ENCODE measurements at regions of chr11 and their contacts with region 1.

Region 1: GRCh38 chr11:8263769-8264410 is at the start of gene LMO1:
- DNase-seq: peak; percentile 83 to 90
- ATAC-seq: peak; percentile 72 to 81 (median 76)
- H3K4me3 ChIP-seq: peak within 1 kb of the TSS; percentile 74
- H3K27ac ChIP-seq: peak within 1 kb of the TSS; percentile 73
- H3K4me1 ChIP-seq: peaks cover 19% of the 10 kb centered on the region
- H3K27me3 ChIP-seq: peaks cover 0 to 40% (median 16%) of the 10 kb centered on the region in 3 donors
- CTCF ChIP-seq: peak; percentile 89
- total RNA-seq, gene LMO1: 3.2 to 9.3 (median 4.4) TPM

Region 2: GRCh38 chr11:7910286-7910788 is 353.6 kb before region 1 on chr11:
- intact Hi-C with region 1: no loop called
- DNase-seq: no peak
- ATAC-seq: no peak
- H3K4me3 ChIP-seq: no peak overlapping the region
- H3K27ac ChIP-seq: no peak overlapping the region
- H3K4me1 ChIP-seq: no peaks in the 10 kb centered on the region
- H3K27me3 ChIP-seq: peaks cover 0 to 2% (median 0%) of the 10 kb centered on the region in 3 donors
- CTCF ChIP-seq: no peak

Region 3: DNA sequence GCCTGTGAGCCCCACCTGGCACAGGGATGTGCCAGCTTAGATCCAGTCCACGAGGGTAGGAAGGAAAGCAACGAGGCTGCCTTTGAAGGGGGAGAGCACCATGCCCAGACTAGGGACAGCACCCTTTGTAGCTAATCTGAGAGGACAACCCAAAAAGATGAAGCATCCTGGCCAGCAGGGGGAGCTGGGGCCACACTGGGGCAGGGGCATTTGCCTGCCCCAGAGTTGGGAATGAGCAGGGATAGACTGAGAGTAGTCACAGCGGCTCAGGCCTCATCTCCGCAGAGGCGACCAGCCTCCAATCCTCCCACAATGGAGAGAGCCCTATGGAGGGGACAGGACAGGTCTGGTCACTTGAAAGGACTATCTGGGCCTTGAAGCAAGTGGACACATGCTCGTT is 16.6 kb before region 1 on chr11:
- intact Hi-C with region 1: loop called in 1 of 2 experiments (anchors 2 kb)
- DNase-seq: peak in 1 of 2 donors; percentile 77
- ATAC-seq: peak; percentile 79 to 91 (median 86)
- H3K4me3 ChIP-seq: no peak overlapping the region
- H3K27ac ChIP-seq: no peak overlapping the region
- H3K4me1 ChIP-seq: no peaks in the 10 kb centered on the region
- H3K27me3 ChIP-seq: no peaks in the 10 kb centered on the region
- CTCF ChIP-seq: peak; percentile 69

Region 4: DNA sequence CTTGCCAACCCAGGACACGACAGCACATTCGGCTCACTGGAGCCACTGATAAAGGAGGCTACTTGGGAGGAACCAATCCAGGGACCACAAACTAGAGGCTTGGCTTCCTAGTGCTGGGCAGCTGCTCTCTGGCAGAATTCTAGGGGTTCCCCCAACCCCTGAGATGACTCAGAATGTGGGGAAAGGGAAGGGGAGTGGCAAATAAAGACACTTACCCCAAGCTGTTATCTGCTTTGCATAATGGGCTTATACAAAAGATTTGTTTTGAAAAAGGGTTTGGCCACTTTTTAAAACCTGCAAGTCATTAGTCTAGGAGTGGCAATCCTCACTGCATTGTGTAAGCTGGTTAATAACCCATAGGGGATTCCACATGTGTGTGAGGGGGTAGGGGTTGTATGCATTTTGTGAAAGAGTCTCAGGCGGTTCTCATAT is 63.9 kb after region 1 on chr11:
- intact Hi-C with region 1: no loop called
- DNase-seq: no peak
- ATAC-seq: no peak
- H3K4me3 ChIP-seq: no peak overlapping the region
- H3K27ac ChIP-seq: no peak overlapping the region
- H3K4me1 ChIP-seq: peaks cover 6% of the 10 kb centered on the region
- H3K27me3 ChIP-seq: no peaks in the 10 kb centered on the region
- CTCF ChIP-seq: no peak